GM12878 (cell line): ENCODE measurements at regions of chr3 and their contacts with region 1.

Region 1: GRCh38 chr3:5026331-5027218 is 47.3 kb downstream of the BHLHE40 start:
- DNase-seq: no peak
- ATAC-seq: peak; percentile 83
- H3K4me3 ChIP-seq: peak overlapping the region; percentile 61; the same call in 1 of the 2 replicates
- H3K27ac ChIP-seq: peak overlapping the region; percentile 68
- H3K4me1 ChIP-seq: peaks cover 31% of the 10 kb centered on the region
- H3K27me3 ChIP-seq: no peaks in the 10 kb centered on the region
- CTCF ChIP-seq: peak; percentile 63 to 72 (median 71)
- EP300 ChIP-seq: no peak; a peak in 1 of 4 replicates
- POLR2A ChIP-seq: 0 out of 2 replicates have a peak, but pooled peaks have one; percentile 31
- RAD21 ChIP-seq: peak; percentile 86

Region 2: DNA sequence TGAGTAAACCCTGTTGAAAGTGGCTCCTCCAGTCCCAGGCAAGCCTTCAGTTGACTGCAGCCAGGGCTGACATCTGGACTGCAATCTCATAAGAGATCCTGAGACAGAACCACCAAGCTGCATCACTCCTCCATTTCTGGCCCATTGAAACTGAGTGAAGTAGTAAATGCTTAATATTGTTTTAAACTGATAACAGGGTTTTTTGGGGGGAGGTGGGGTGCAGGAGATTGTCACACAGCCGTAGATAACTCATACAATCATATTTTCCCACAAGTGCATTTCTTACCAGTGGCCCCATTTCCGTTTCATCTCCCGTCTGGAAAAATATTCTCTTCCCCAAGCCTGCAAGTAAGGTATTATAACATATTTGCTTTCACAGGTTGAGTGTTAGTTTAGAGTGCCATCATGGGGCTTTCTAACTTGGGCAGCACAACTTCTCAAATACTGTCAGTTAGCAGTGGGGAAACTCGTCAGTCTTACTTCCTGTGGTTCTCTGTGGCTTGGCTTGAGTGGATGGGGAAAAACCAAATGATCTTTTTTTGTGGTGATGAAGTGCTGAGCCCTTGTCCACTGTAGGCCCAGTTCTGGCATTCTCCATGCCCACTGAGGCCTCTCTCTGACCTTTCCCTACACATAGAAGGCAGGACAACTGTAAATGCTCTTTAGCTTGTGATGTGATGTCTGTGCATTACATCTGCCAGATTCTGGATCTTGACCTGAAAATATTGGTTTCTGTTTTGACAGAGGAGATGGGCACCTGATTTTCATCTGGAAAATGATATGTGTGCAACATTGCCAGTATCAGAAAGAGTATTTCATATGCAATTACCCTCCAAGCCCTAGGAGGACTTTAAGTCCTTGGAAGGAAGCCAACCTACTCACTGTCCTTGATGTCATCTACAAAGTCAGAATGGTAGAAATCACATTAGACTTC is 137.4 kb before region 1 on chr3:
- CTCF ChIA-PET with region 1: no interaction called
- POLR2A ChIA-PET with region 1: no interaction called
- RAD21 ChIA-PET with region 1: no interaction called
- SMC1A ChIA-PET with region 1: interaction called, 3 read pairs
- in situ Hi-C with region 1: no loop called
- intact Hi-C with region 1: loop called (anchors 2 kb)
- DNase-seq: peak; percentile 71
- ATAC-seq: peak; percentile 96
- H3K4me3 ChIP-seq: no peak overlapping the region; the same call in 1 of the 2 replicates
- H3K27ac ChIP-seq: peak overlapping the region; percentile 69
- H3K4me1 ChIP-seq: peaks cover 12% of the 10 kb centered on the region
- H3K27me3 ChIP-seq: no peaks in the 10 kb centered on the region
- CTCF ChIP-seq: peak in 1 of 3 experiments; percentile 45; a peak in 3 of 6 replicates
- EP300 ChIP-seq: peak; percentile 51 to 71; a peak in 3 of 4 replicates
- POLR2A ChIP-seq: no peak
- RAD21 ChIP-seq: peak; percentile 74

Region 3: DNA sequence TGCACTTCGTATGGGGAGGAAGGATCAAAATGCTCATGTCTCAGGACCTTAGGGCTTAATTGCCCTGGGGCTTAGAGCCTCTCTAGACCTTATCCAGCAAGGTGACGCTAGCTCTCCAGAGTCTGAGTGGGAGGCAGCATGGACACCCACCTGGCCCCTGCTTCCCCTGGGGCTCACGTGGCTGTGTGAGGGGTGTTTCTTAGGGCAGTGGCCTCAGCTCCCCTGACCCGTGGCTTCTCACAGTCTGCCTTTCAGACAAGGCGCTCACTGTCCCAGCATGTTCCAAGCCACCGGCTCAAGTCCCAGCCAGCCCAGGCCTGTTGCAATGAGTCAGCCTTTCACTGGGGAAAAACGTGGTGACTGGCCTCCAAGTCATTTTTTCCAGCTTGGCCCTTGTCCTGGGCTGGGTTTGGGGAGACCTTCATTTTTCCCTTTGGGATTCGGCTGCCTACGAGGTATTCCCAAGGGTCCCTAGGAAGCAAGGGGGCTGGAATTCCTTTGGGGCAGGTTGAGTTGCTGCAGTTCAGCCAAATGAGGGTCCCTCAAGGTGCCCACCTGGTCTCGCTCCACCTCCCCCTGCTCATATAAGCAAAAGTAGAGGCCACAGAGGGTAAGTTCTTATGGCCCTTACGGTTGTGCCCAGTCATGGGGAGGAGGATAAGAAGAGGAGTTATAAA is 31.6 kb before region 1 on chr3:
- CTCF ChIA-PET with region 1: interaction called, 9 read pairs
- POLR2A ChIA-PET with region 1: interaction called, 7 read pairs
- RAD21 ChIA-PET with region 1: interaction called, 4 read pairs
- SMC1A ChIA-PET with region 1: interaction called, 18 read pairs
- in situ Hi-C with region 1: no loop called
- intact Hi-C with region 1: no loop called
- DNase-seq: no peak
- ATAC-seq: peak; percentile 75
- H3K4me3 ChIP-seq: no peak overlapping the region
- H3K27ac ChIP-seq: peak overlapping the region; percentile 7; the same call in 1 of the 2 replicates
- H3K4me1 ChIP-seq: peaks cover 10% of the 10 kb centered on the region
- H3K27me3 ChIP-seq: no peaks in the 10 kb centered on the region
- CTCF ChIP-seq: no peak
- EP300 ChIP-seq: no peak
- POLR2A ChIP-seq: 0 out of 2 replicates have a peak, but pooled peaks have one; percentile 31
- RAD21 ChIP-seq: no peak

Region 4: GRCh38 chr3:5016218-5017161 is 10.1 kb before region 1 on chr3:
- CTCF ChIA-PET with region 1: interaction called, 17 read pairs
- POLR2A ChIA-PET with region 1: interaction called, 48 read pairs
- RAD21 ChIA-PET with region 1: interaction called, 43 read pairs
- SMC1A ChIA-PET with region 1: interaction called, 84 read pairs
- in situ Hi-C with region 1: no loop called
- intact Hi-C with region 1: no loop called
- DNase-seq: no peak
- ATAC-seq: peak; percentile 63
- H3K4me3 ChIP-seq: no peak overlapping the region
- H3K27ac ChIP-seq: no peak overlapping the region
- H3K4me1 ChIP-seq: peaks cover 43% of the 10 kb centered on the region
- H3K27me3 ChIP-seq: no peaks in the 10 kb centered on the region
- CTCF ChIP-seq: no peak
- EP300 ChIP-seq: peak; percentile 69 to 76; a peak in 2 of 4 replicates
- POLR2A ChIP-seq: no peak
- RAD21 ChIP-seq: no peak

Region 5: GRCh38 chr3:5095879-5096278 is 69.3 kb after region 1 on chr3:
- CTCF ChIA-PET with region 1: no interaction called
- POLR2A ChIA-PET with region 1: no interaction called
- RAD21 ChIA-PET with region 1: no interaction called
- SMC1A ChIA-PET with region 1: no interaction called
- in situ Hi-C with region 1: no loop called
- intact Hi-C with region 1: no loop called
- DNase-seq: no peak
- ATAC-seq: peak; percentile 66
- H3K4me3 ChIP-seq: no peak overlapping the region
- H3K27ac ChIP-seq: no peak overlapping the region
- H3K4me1 ChIP-seq: no peaks in the 10 kb centered on the region
- H3K27me3 ChIP-seq: peaks cover 4 to 5% of the 10 kb centered on the region in 2 experiments; a peak in 3 of 4 replicates
- CTCF ChIP-seq: no peak
- EP300 ChIP-seq: no peak
- POLR2A ChIP-seq: no peak
- RAD21 ChIP-seq: no peak